ENCODE measurements at regions of chrX and their contacts with region 1.

Region 1: DNA sequence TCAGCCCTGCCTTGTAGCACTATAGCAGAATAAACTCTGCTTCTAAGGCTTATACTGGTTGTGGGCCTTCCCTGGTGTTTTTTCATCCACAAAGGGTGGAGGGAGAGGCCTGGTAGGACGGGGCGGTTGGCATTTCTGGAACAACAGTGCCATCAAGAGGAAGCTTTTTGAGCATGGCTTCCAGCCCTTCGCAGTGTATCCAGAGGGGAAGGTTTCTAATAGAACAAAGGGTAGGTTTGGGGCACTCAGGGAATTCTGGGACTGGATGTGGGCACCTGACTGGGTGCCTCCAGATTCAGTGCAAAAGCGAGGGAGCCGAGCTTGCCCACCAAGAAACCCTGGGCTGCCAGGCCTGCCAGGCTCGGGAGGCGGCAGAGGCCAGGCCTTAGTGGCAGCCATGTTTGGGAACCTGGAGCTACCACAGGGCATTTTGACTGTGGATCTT is 229.6 kb upstream of the AGTR2 start:
- DNase-seq: peak; percentile 26 to 97 (median 75)

Region 2: GRCh38 chrX:115650916-115651315 is 290.0 kb before region 1 on chrX:
- intact Hi-C with region 1: loop called (anchors 10 kb)
- DNase-seq: peak in 7 of 10 donors; percentile 12 to 88 (median 34)

Region 3: GRCh38 chrX:115894087-115894486 is 46.8 kb before region 1 on chrX:
- intact Hi-C with region 1: loop called (anchors 1 kb)
- DNase-seq: peak in 3 of 10 donors; percentile 23 to 91 (median 37)

Measured in posterior cingulate gyrus (tissue), 11 donors.